Breast epithelium (tissue), 4 donors: ENCODE measurements at regions of chr11 and their contacts with region 1.

Region 1: DNA sequence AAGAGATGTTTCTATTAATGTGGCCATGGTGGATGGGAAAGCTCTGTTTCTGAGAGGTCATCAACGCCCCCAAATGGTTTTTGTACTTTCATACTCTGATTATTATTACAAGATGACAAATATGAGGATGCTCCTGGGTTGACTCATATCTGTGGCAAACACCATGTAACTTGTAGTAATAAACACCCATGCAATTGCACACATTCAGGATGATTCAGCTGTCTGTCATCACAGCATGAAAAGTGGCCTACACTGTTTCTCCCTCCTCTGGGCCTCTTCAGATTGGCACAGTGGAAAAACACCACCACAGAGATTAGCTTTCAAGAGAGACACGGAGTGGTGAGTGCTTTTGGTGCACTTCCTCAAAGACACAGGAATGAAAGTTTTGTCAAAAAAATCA is 85.4 kb downstream of the MTNR1B start:
- DNase-seq: no peak
- H3K4me3 ChIP-seq: no peak overlapping the region
- H3K27ac ChIP-seq: no peak overlapping the region
- H3K4me1 ChIP-seq: no peaks in the 10 kb centered on the region
- H3K27me3 ChIP-seq: no peaks in the 10 kb centered on the region
- CTCF ChIP-seq: no peak
- POLR2A ChIP-seq: no peak

Region 2: DNA sequence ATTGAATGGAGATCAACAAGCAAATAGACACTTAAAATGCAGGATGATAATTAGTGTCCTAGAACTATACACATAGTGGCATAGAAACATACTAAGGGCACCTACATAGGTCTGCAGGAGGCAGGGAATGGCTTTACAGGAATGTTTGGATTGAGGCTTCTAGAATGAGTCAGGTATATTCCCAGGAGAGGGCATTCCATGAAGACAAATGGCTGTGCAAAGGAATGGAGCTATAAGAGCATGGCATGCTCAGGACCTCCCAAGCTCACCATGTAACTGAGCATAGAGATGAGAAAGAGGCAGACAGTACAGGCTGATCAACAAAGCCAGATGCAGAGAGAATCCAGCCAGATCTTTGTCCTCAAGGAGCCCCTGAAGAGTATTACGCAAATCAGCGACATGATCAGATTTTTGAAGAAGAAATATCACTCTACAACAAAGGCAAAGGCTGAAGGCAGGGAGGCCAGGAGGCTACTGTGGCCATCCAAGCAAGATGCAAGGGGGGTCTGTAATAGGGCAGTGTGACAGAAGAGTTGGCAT is 296.6 kb before region 1 on chr11:
- intact Hi-C with region 1: loop called (anchors 5 kb)
- DNase-seq: no peak
- H3K4me3 ChIP-seq: no peak overlapping the region
- H3K27ac ChIP-seq: no peak overlapping the region
- H3K4me1 ChIP-seq: no peaks in the 10 kb centered on the region
- H3K27me3 ChIP-seq: no peaks in the 10 kb centered on the region
- CTCF ChIP-seq: no peak
- POLR2A ChIP-seq: no peak

Region 3: DNA sequence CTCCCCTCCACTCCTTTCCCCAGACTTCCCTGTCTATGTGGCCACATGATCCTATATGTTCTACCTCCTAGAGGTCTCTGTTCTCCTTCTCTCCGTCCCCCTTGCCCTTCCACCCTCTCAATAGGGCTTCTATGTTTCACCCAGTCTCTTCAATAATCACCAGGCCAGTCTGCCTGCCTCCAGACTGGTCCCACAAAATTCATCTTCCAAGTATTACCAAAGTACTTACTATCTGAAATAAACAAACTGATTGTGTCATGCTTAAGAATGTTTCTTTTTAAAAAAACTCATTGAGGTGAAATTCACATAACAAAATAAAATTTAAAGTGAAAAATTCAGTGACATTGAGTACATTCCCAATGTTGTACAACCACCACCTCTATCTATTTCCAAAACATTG is 41.2 kb before region 1 on chr11:
- intact Hi-C with region 1: no loop called
- DNase-seq: no peak
- H3K4me3 ChIP-seq: no peak overlapping the region
- H3K27ac ChIP-seq: no peak overlapping the region
- H3K4me1 ChIP-seq: no peaks in the 10 kb centered on the region
- H3K27me3 ChIP-seq: no peaks in the 10 kb centered on the region
- CTCF ChIP-seq: no peak
- POLR2A ChIP-seq: no peak